ENCODE measurements at regions of chr6 and their contacts with region 1.

Region 1: GRCh38 chr6:87154993-87155841 is at the start of gene ZNF292:
- DNase-seq: peak; percentile 94 to 98 (median 96)
- ATAC-seq: peak; percentile 90 to 95 (median 91)
- H3K4me3 ChIP-seq: peak within 1 kb of the TSS; percentile 69 to 97 (median 86)
- H3K27ac ChIP-seq: peak within 1 kb of the TSS; percentile 90 to 97 (median 94)
- H3K4me1 ChIP-seq: peaks cover 3 to 66% (median 40%) of the 10 kb centered on the region in 12 donors
- H3K27me3 ChIP-seq: no peaks in the 10 kb centered on the region
- CTCF ChIP-seq: peak in 4 of 12 donors; percentile 10 to 34 (median 28)
- POLR2A ChIP-seq: peak in 1 of 2 donors; percentile 18
- total RNA-seq, gene ZNF292: 13.6 to 35.8 (median 28.1) TPM

Region 2: GRCh38 chr6:85678602-85679444 is 1476.4 kb before region 1 on chr6:
- intact Hi-C with region 1: loop called in 1 of 10 experiments (anchors 10 kb)
- DNase-seq: peak; percentile 98 to 99 (median 98)
- ATAC-seq: peak; percentile 98 to 99 (median 98)
- H3K4me3 ChIP-seq: peak overlapping the region; percentile 63 to 93 (median 84)
- H3K27ac ChIP-seq: peak overlapping the region; percentile 82 to 95 (median 92)
- H3K4me1 ChIP-seq: peaks cover 0 to 45% (median 25%) of the 10 kb centered on the region in 12 donors
- H3K27me3 ChIP-seq: no peaks in the 10 kb centered on the region
- CTCF ChIP-seq: peak in 1 of 12 donors; percentile 14
- POLR2A ChIP-seq: peak; percentile 94 to 100

Region 3: GRCh38 chr6:87210979-87211378 is 55.8 kb after region 1 on chr6:
- intact Hi-C with region 1: no loop called
- DNase-seq: no peak
- ATAC-seq: no peak
- H3K4me3 ChIP-seq: no peak overlapping the region
- H3K27ac ChIP-seq: no peak overlapping the region
- H3K4me1 ChIP-seq: peaks cover 0 to 44% (median 23%) of the 10 kb centered on the region in 12 donors
- H3K27me3 ChIP-seq: no peaks in the 10 kb centered on the region
- CTCF ChIP-seq: no peak
- POLR2A ChIP-seq: no peak

Region 4: GRCh38 chr6:87230801-87231200 is 75.6 kb after region 1 on chr6:
- intact Hi-C with region 1: loop called in 6 of 10 experiments (anchors 5 to 10 kb)
- DNase-seq: no peak
- ATAC-seq: no peak
- H3K4me3 ChIP-seq: no peak overlapping the region
- H3K27ac ChIP-seq: no peak overlapping the region
- H3K4me1 ChIP-seq: no peaks in the 10 kb centered on the region
- H3K27me3 ChIP-seq: no peaks in the 10 kb centered on the region
- CTCF ChIP-seq: no peak
- POLR2A ChIP-seq: no peak

Region 5: DNA sequence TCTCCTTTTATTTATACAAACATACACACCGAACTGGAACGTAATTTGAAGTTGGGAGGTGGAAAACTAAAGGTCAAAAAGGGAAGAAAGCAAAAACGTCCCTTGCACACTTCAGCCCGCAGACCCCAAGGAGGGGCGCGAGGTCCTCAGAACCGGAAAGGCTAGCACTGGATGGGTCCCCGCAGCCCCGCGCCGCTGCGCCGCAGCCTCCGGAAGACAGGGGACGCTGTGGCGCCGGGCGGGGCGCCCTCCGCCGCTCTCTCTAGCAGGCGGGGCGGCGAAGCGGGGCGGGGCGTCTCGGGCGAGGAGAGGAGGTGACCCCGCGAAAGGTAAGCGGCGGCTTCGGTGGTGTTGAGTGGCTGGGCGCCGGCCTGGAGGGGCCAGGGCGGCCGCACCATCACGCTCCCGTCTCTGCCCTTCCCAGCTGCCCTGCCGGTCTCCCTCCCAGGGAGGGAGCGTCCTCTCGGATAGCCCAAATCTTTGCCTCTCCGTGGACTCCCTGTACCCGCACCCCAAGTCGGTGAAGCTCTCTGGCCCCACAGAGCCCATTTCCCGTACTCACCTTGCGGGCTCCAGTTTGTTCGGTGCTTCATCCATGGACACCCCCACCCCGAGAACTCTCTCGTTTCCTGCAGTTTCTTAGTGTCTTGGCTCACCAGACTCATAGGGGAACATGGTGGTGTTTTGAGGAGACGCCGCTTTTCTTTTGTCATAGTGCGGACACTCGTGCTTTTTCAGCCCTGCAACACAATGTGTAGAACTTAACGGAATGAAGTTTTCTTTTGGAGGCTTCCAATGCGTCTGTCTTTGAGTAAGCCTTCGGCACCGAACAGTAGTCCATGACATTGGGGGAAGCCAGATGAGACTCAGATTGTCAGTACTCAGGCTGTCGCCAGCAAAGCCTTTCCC is 167.3 kb after region 1 on chr6 and contains the start of gene SMIM8:
- intact Hi-C with region 1: loop called in 1 of 10 experiments (anchors 5 kb)
- DNase-seq: peak; percentile 84 to 92 (median 90)
- ATAC-seq: peak; percentile 93 to 100 (median 100)
- H3K4me3 ChIP-seq: peak within 1 kb of the TSS; percentile 45 to 99 (median 84)
- H3K27ac ChIP-seq: peak within 1 kb of the TSS in 11 of 12 donors; percentile 60 to 91 (median 80)
- H3K4me1 ChIP-seq: peaks cover 0 to 5% (median 0%) of the 10 kb centered on the region in 12 donors
- H3K27me3 ChIP-seq: no peaks in the 10 kb centered on the region
- CTCF ChIP-seq: peak; percentile 96 to 100 (median 98)
- POLR2A ChIP-seq: peak in 1 of 2 donors; percentile 50
- total RNA-seq, gene SMIM8: 6.0 to 17.5 (median 9.0) TPM

Region 6: GRCh38 chr6:87472525-87473418 is 317.6 kb after region 1 on chr6 and contains the start of gene SLC35A1:
- intact Hi-C with region 1: loop called in 1 of 10 experiments (anchors 10 kb)
- DNase-seq: peak; percentile 87 to 95 (median 90)
- ATAC-seq: peak; percentile 98 to 100 (median 98)
- H3K4me3 ChIP-seq: peak within 1 kb of the TSS; percentile 69 to 98 (median 86)
- H3K27ac ChIP-seq: peak within 1 kb of the TSS; percentile 78 to 96 (median 94)
- H3K4me1 ChIP-seq: peaks cover 0 to 20% (median 7%) of the 10 kb centered on the region in 12 donors
- H3K27me3 ChIP-seq: no peaks in the 10 kb centered on the region
- CTCF ChIP-seq: peak in 11 of 12 donors; percentile 13 to 45 (median 28)
- POLR2A ChIP-seq: peak in 1 of 2 donors; percentile 68
- total RNA-seq, gene SLC35A1: 6.3 to 12.2 (median 9.3) TPM

Region 7: GRCh38 chr6:87701676-87702588 is 546.7 kb after region 1 on chr6 and contains the start of gene AKIRIN2:
- intact Hi-C with region 1: loop called in 3 of 10 experiments (anchors 10 kb)
- DNase-seq: peak; percentile 96 to 98 (median 96)
- ATAC-seq: peak; percentile 92 to 96 (median 94)
- H3K4me3 ChIP-seq: peak within 1 kb of the TSS; percentile 56 to 99 (median 86)
- H3K27ac ChIP-seq: peak within 1 kb of the TSS; percentile 82 to 99 (median 96)
- H3K4me1 ChIP-seq: peaks cover 0 to 43% (median 24%) of the 10 kb centered on the region in 12 donors
- H3K27me3 ChIP-seq: no peaks in the 10 kb centered on the region
- CTCF ChIP-seq: peak in 1 of 12 donors; percentile 5
- POLR2A ChIP-seq: peak; percentile 96 to 98
- total RNA-seq, gene AKIRIN2: 15.2 to 54.7 (median 40.7) TPM

Measured in heart left ventricle (tissue), 16 donors.